GM12878 (cell line): ENCODE measurements at regions of chr2 and their contacts with region 1.

Region 1: GRCh38 chr2:13745330-13745729 is 887.2 kb upstream of the LRATD1 start:
- DNase-seq: no peak
- ATAC-seq: no peak
- H3K4me3 ChIP-seq: no peak overlapping the region
- H3K27ac ChIP-seq: no peak overlapping the region
- H3K4me1 ChIP-seq: no peaks in the 10 kb centered on the region
- H3K27me3 ChIP-seq: no peaks in the 10 kb centered on the region
- CTCF ChIP-seq: no peak
- EP300 ChIP-seq: no peak
- POLR2A ChIP-seq: no peak
- RAD21 ChIP-seq: no peak

Region 2: GRCh38 chr2:13758412-13758811 is 13.1 kb after region 1 on chr2:
- CTCF ChIA-PET with region 1: interaction called, 5 read pairs
- POLR2A ChIA-PET with region 1: interaction called, 3 read pairs
- RAD21 ChIA-PET with region 1: no interaction called
- SMC1A ChIA-PET with region 1: interaction called, 10 read pairs
- in situ Hi-C with region 1: no loop called
- intact Hi-C with region 1: no loop called
- DNase-seq: peak; percentile 34
- ATAC-seq: peak; percentile 88
- H3K4me3 ChIP-seq: no peak overlapping the region
- H3K27ac ChIP-seq: no peak overlapping the region
- H3K4me1 ChIP-seq: no peaks in the 10 kb centered on the region
- H3K27me3 ChIP-seq: no peaks in the 10 kb centered on the region
- CTCF ChIP-seq: no peak
- EP300 ChIP-seq: peak; percentile 72 to 73; a peak in 3 of 4 replicates
- POLR2A ChIP-seq: no peak
- RAD21 ChIP-seq: no peak